Left ventricle myocardium inferior (tissue), 1 donor: ENCODE measurements at regions of chr1 and their contacts with region 1.

Region 1: DNA sequence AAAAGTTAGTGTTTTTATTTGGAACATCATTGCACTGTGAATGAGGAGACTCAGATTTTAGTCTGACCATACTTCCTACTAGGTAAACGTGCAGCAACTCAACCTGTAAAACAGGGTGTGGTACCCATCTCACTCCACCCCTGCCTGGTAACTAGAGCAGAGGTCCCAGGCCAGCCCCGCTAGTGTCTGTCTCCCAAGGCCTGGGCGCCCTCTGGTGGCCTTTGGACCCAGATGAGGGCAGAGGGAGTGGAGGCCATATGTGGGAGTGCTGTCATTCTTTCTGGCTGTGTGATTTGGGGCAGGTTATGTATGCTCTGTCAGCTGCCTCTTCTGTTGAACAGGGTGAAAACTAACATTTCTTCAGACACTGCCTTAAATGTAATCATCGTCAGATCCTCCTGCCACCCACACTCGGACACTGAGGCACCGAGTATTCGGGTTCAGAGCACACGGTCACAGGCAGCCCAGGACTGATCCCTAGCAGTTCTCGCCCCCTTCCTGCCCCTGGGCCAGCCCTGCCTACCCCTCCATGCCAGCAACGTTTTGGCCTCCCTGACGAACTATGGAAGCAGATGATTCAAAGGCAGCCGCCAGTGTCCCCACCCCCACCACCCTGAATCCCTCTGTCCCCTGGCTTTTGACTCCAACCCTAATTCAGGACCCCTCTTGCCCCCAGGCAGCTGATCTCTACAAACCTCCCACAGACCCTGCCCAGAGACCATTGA is 76.0 kb downstream of the CD247 start:
- DNase-seq: peak; percentile 85
- H3K4me3 ChIP-seq: no peak overlapping the region
- H3K27ac ChIP-seq: no peak overlapping the region
- H3K4me1 ChIP-seq: peaks cover 12% of the 10 kb centered on the region
- H3K27me3 ChIP-seq: peaks cover 36% of the 10 kb centered on the region
- CTCF ChIP-seq: peak; percentile 91

Region 2: GRCh38 chr1:167066333-167067122 is 375.8 kb before region 1 on chr1:
- intact Hi-C with region 1: loop called (anchors 5 kb)
- DNase-seq: peak; percentile 72
- H3K4me3 ChIP-seq: peak overlapping the region; percentile 42
- H3K27ac ChIP-seq: no peak overlapping the region
- H3K4me1 ChIP-seq: peaks cover 4% of the 10 kb centered on the region
- H3K27me3 ChIP-seq: peaks cover 7% of the 10 kb centered on the region
- CTCF ChIP-seq: peak; percentile 98

Region 3: GRCh38 chr1:167548059-167548932 is 106.0 kb after region 1 on chr1:
- intact Hi-C with region 1: no loop called
- DNase-seq: no peak
- H3K4me3 ChIP-seq: no peak overlapping the region
- H3K27ac ChIP-seq: peak overlapping the region; percentile 35
- H3K4me1 ChIP-seq: peaks cover 40% of the 10 kb centered on the region
- H3K27me3 ChIP-seq: no peaks in the 10 kb centered on the region
- CTCF ChIP-seq: no peak